ENCODE measurements at regions of chr17 and their contacts with region 1.

Region 1: GRCh38 chr17:2975469-2975958 is 87.9 kb downstream of the OR1D5 start:
- DNase-seq: no peak
- ATAC-seq: no peak
- H3K4me3 ChIP-seq: no peak overlapping the region
- H3K27ac ChIP-seq: no peak overlapping the region
- H3K4me1 ChIP-seq: no peaks in the 10 kb centered on the region
- H3K27me3 ChIP-seq: no peaks in the 10 kb centered on the region

Region 2: DNA sequence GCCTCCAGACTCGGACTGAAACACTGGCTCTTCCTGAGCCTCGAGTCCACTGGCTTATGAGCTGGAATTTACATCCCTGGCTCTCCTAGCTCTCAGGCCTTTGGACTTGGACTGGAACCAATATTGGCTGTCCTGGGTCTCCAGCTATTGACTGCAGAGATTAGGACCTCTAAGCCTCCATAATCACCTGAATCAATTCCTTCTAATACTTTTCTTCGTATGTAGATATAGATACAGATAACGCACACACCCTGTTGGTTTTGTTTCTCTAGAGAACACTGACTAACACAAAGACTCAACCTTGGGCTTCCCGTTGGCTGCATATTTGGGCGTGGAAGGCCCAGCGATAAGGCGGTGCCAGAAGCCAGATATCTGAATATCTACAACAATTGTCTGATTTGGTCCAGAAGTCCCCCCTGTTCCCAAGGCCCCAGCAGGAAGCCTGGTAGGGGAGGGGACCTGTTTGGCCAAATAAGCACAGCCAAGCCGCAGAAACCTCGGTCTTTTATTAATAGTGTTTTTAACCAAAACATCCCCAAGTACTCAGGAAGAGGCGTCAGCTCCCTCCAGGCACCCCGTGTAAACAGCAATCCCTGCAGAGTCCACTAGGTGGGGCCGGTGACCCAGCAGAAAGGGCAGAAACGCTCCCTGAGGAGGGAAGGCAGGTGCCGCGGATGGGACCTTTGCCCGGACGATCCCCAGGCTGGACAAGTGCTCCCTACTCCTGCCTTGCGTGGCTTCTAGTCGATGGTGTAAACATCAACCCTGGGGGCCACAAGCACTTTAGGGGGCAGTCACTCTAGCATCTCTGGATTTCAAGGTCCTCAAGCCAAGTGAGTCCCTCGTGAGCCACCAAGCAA is 1852.8 kb before region 1 on chr17:
- intact Hi-C with region 1: no loop called
- DNase-seq: peak; percentile 88 to 94
- ATAC-seq: peak; percentile 91
- H3K4me3 ChIP-seq: no peak overlapping the region
- H3K27ac ChIP-seq: no peak overlapping the region
- H3K4me1 ChIP-seq: no peaks in the 10 kb centered on the region
- H3K27me3 ChIP-seq: no peaks in the 10 kb centered on the region

Region 3: DNA sequence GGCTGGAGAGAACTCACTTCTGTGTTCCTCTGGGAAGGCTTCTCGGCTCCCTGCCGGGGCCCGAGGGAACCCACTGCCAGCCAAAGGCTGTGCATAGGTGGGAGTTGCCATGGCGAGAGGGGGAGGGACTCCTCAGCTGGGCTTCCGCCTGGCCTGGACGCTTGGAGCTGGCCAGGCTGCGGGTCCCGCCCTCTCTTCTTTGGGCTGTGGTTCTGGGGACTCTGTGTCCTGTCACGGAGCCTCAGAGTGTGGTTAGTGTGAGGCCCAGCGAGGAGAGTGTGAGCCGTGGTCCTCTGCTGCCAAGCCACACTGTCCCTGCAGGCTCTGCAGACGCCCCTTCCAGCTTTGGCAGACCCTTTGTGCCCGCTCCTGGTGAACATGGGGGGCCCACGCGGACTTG is 35.2 kb before region 1 on chr17:
- intact Hi-C with region 1: loop called in 1 of 2 experiments (anchors 2 kb)
- DNase-seq: peak in 1 of 2 donors; percentile 64
- ATAC-seq: peak; percentile 49
- H3K4me3 ChIP-seq: no peak overlapping the region
- H3K27ac ChIP-seq: no peak overlapping the region
- H3K4me1 ChIP-seq: no peaks in the 10 kb centered on the region
- H3K27me3 ChIP-seq: no peaks in the 10 kb centered on the region

Measured in aorta (tissue), 5 donors.